IMR-90 (cell line): ENCODE measurements at regions of chr2 and their contacts with region 1.

Region 1: DNA sequence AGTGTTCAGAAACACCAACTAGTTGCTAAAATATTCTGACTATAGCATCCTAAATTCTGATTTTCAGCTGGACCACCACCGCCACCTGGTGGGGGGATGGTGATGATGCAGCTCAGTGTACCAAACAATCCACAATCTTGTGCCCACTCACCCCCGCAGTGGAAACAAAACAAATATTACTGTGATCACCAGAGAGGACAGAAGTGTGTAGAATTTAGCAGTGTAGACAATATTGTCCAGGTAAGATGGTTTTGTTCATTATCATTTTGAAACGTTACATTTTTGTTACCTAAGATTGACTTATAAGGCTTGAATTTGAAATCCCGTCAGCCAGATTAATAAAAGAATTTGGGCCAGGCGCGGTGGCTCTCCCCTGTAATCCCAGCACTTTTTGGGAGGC is 31.7 kb upstream of the UBXN4 start:
- DNase-seq: peak; percentile 39
- ATAC-seq: peak; percentile 94
- H3K4me3 ChIP-seq: no peak overlapping the region
- H3K27ac ChIP-seq: no peak overlapping the region
- H3K4me1 ChIP-seq: no peaks in the 10 kb centered on the region
- H3K27me3 ChIP-seq: no peaks in the 10 kb centered on the region
- CTCF ChIP-seq: peak; percentile 89
- POLR2A ChIP-seq: no peak
- RAD21 ChIP-seq: peak; percentile 92

Region 2: GRCh38 chr2:134988994-134989605 is 720.9 kb before region 1 on chr2:
- CTCF ChIA-PET with region 1: interaction called, 6 read pairs
- POLR2A ChIA-PET with region 1: no interaction called
- dilution Hi-C with region 1: no loop called
- in situ Hi-C with region 1: no loop called
- intact Hi-C with region 1: loop called (anchors 5 kb)
- DNase-seq: peak; percentile 50
- ATAC-seq: peak; percentile 84
- H3K4me3 ChIP-seq: no peak overlapping the region
- H3K27ac ChIP-seq: no peak overlapping the region
- H3K4me1 ChIP-seq: no peaks in the 10 kb centered on the region
- H3K27me3 ChIP-seq: peaks cover 10% of the 10 kb centered on the region
- CTCF ChIP-seq: peak; percentile 56
- POLR2A ChIP-seq: no peak
- RAD21 ChIP-seq: peak; percentile 50

Region 3: GRCh38 chr2:135052042-135052876 is 657.7 kb before region 1 on chr2 and contains the start of gene RAB3GAP1:
- CTCF ChIA-PET with region 1: interaction called, 3 read pairs
- POLR2A ChIA-PET with region 1: interaction called, 19 read pairs
- dilution Hi-C with region 1: no loop called
- in situ Hi-C with region 1: no loop called
- intact Hi-C with region 1: no loop called
- DNase-seq: peak; percentile 83
- ATAC-seq: peak; percentile 94
- H3K4me3 ChIP-seq: peak within 1 kb of the TSS; percentile 71
- H3K27ac ChIP-seq: peak within 1 kb of the TSS; percentile 82
- H3K4me1 ChIP-seq: no peaks in the 10 kb centered on the region; the same call in 1 of the 2 replicates
- H3K27me3 ChIP-seq: peaks cover 3% of the 10 kb centered on the region; the same call in 1 of the 2 replicates
- CTCF ChIP-seq: no peak
- POLR2A ChIP-seq: peak; percentile 94
- RAD21 ChIP-seq: no peak
- total RNA-seq, gene RAB3GAP1: 65.8 and 85.5 TPM in 2 replicates

Region 4: GRCh38 chr2:135473567-135473966 is 236.4 kb before region 1 on chr2:
- CTCF ChIA-PET with region 1: interaction called, 4 read pairs
- POLR2A ChIA-PET with region 1: no interaction called
- dilution Hi-C with region 1: no loop called
- in situ Hi-C with region 1: no loop called
- intact Hi-C with region 1: loop called (anchors 1 kb)
- DNase-seq: peak; percentile 8
- ATAC-seq: no peak
- H3K4me3 ChIP-seq: no peak overlapping the region
- H3K27ac ChIP-seq: no peak overlapping the region
- H3K4me1 ChIP-seq: no peaks in the 10 kb centered on the region
- H3K27me3 ChIP-seq: no peaks in the 10 kb centered on the region
- CTCF ChIP-seq: peak; percentile 49
- POLR2A ChIP-seq: no peak
- RAD21 ChIP-seq: peak; percentile 66

Region 5: DNA sequence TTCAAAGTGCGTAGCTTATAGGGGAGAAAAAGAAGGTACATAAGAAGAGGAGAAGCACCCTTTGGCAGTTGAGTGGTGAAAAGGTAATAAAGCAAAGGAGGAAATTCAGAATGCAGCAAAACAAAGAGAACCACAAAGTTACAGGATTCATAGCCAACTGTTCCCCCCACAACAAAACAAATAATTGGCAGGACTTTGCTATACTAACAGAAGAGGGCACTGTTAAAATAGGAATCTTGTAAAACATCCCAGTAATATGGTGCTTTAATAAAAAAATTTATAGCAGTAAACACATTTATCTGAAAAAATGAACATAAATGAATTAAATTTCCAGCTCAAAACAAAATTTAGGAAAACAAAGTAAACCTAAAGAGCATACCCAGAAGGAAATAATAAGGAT is 136.4 kb before region 1 on chr2:
- CTCF ChIA-PET with region 1: interaction called, 3 read pairs
- POLR2A ChIA-PET with region 1: no interaction called
- dilution Hi-C with region 1: no loop called
- in situ Hi-C with region 1: no loop called
- intact Hi-C with region 1: loop called (anchors 10 kb)
- DNase-seq: no peak
- ATAC-seq: no peak
- H3K4me3 ChIP-seq: no peak overlapping the region
- H3K27ac ChIP-seq: no peak overlapping the region
- H3K4me1 ChIP-seq: no peaks in the 10 kb centered on the region
- H3K27me3 ChIP-seq: no peaks in the 10 kb centered on the region
- CTCF ChIP-seq: no peak
- POLR2A ChIP-seq: no peak
- RAD21 ChIP-seq: no peak

Region 6: GRCh38 chr2:135635212-135635835 is 74.7 kb before region 1 on chr2:
- CTCF ChIA-PET with region 1: no interaction called
- POLR2A ChIA-PET with region 1: no interaction called
- dilution Hi-C with region 1: no loop called
- in situ Hi-C with region 1: no loop called
- intact Hi-C with region 1: no loop called
- DNase-seq: no peak
- ATAC-seq: no peak
- H3K4me3 ChIP-seq: no peak overlapping the region
- H3K27ac ChIP-seq: no peak overlapping the region
- H3K4me1 ChIP-seq: no peaks in the 10 kb centered on the region
- H3K27me3 ChIP-seq: no peaks in the 10 kb centered on the region
- CTCF ChIP-seq: no peak
- POLR2A ChIP-seq: no peak
- RAD21 ChIP-seq: no peak